Activated CD4-positive, alpha-beta T cell treated with anti-CD3 and anti-CD28 coated beads for 36 hours (primary cell): ENCODE measurements at regions of chr9 and their contacts with region 1.

Region 1: DNA sequence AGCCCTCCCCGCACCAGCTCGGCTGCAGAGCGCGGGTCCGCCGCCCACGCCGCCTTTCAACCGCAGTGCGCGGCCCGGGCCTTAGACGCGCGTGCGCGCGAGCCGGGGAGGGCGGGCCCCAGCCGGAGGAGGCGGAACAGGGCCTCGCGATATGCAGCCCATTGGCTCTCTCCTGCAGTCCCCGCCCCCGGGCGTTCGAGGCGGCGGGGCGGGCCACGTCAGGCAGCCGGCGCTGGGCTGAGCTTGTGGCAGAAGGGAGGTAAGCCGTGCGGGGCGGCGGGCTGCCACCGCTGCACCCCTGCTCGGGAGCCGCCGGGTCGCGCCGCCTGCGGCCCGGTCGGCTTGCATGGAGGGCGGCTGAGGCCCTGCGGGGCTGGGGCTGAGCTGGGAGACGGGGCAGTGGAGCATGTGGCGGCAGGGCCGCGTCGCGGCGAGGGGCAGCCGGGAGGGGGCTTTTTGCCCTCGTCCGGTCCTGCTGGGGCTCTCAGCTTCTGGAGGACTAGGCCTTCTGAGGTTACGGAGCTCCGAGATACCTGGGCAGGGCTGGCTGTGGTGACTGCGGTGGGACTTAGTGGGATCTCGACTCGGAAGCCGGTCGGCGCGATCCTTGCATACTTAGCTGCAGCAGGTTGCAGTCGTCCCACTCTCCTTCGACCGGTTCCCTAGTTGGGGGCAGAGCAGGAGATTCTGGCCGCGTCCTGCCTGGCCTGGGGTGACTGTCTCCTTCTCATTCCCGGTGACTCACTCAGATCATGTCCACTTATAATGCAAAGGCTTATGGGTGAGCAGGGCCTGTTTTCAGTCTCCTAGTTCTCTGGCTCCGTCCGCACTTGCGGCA is at the start of gene FOCAD:
- DNase-seq: peak; percentile 97
- ATAC-seq: peak; percentile 98
- H3K4me3 Mint-ChIP-seq: peak within 1 kb of the TSS; percentile 86
- H3K27ac Mint-ChIP-seq: peak within 1 kb of the TSS; percentile 75
- H3K4me1 Mint-ChIP-seq: peaks cover 27% of the 10 kb centered on the region
- H3K27me3 Mint-ChIP-seq: no peaks in the 10 kb centered on the region
- total RNA-seq, gene FOCAD: 32.5 to 34.3 TPM

Region 2: DNA sequence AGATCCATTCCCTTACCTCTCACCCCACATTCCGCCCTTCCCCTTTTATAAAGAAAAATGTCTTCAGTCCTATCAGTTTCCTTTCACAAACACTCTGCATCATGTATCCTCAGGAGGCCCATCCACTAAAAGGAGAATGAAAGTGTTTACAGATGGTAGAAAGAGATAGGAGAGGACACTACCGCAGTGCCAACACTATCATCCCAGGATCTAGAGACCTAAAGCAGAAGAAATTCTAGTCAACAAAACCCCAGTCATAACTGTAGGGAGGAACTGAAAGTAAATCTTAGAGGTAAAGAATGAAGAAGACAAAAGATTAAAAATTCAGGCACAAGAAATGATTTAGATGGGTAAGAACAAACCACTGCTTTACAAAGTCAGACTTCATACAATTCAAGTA is 176.0 kb before region 1 on chr9:
- CTCF ChIA-PET with region 1: no interaction called
- POLR2A ChIA-PET with region 1: no interaction called
- intact Hi-C with region 1: loop called (anchors 2 to 5 kb)
- DNase-seq: no peak
- ATAC-seq: peak; percentile 79
- H3K4me3 Mint-ChIP-seq: peak overlapping the region; percentile 27
- H3K27ac Mint-ChIP-seq: peak overlapping the region; percentile 22
- H3K4me1 Mint-ChIP-seq: peaks cover 81% of the 10 kb centered on the region
- H3K27me3 Mint-ChIP-seq: no peaks in the 10 kb centered on the region

Region 3: GRCh38 chr9:20771729-20772128 is 87.5 kb after region 1 on chr9:
- CTCF ChIA-PET with region 1: no interaction called
- POLR2A ChIA-PET with region 1: no interaction called
- intact Hi-C with region 1: no loop called
- DNase-seq: no peak
- ATAC-seq: no peak
- H3K4me3 Mint-ChIP-seq: no peak overlapping the region
- H3K27ac Mint-ChIP-seq: no peak overlapping the region
- H3K4me1 Mint-ChIP-seq: no peaks in the 10 kb centered on the region
- H3K27me3 Mint-ChIP-seq: no peaks in the 10 kb centered on the region

Region 4: DNA sequence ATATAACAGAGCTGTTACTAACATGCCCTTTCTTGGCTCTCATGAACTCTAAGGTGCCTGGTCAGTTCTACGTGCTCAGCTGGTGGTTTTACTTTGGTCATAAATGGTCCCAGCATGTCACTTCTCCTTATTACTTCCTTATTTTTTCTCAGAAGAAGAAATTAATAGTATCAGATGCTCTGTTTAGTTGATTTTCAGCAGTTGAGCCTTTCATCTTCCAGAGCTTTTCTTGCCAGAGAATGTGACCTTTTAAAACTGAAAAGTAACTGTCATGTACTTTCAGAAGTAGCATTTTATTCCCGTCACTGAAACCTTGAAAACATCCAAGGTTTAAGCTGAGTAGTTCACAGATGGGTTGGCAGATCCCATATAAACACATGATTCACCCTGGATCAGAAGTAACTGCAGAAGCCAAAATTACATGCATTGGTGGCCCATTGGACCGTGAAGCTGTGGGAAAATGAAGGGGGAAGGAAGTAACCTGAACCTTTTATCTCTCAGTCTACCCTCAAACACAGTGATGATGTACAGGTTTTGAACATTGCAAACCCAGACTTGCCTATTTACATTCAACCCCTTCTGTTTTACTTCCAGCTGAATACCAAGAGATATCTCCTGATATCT is 296.7 kb after region 1 on chr9:
- CTCF ChIA-PET with region 1: no interaction called
- POLR2A ChIA-PET with region 1: no interaction called
- intact Hi-C with region 1: no loop called
- DNase-seq: no peak
- ATAC-seq: no peak
- H3K4me3 Mint-ChIP-seq: no peak overlapping the region
- H3K27ac Mint-ChIP-seq: no peak overlapping the region
- H3K4me1 Mint-ChIP-seq: peaks cover 4% of the 10 kb centered on the region
- H3K27me3 Mint-ChIP-seq: no peaks in the 10 kb centered on the region

Region 5: DNA sequence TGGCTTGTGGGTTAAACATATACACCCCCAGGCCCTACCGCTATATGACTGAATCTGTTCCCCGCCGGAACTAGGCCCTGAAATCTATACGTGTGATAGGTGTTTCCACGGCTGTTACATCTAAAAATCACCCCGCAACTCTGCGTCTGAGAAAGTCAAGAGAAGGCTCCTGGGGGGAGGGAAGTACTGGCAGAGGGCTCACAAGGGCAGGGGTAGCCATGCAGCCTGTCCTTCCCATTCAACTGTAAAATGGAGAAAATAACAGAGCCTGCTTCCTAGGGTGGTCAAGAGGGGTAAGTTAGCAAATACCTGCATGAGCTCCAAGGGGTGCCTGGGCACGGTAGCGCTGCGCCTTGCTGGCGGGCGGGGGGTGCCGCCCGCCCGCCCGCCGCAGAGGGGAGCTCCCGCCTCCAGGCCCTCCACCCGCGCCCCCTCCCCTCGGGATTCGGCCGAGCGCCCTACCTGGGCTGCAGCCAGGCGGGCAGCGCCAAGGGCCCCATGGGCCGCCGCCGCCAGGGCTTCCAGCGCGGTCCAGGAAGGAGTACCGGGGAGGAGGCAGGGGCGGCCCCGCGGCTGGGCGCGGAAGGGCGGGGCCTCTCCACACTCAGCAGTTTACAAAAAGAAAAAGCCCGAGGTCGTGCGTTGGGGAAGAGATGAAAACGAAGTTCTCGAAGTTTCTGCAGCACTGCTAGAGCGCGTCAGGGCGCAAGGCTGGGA is 347.0 kb after region 1 on chr9 and contains the start of gene HACD4:
- CTCF ChIA-PET with region 1: no interaction called
- POLR2A ChIA-PET with region 1: no interaction called
- intact Hi-C with region 1: loop called in 1 of 2 experiments (anchors 1 kb)
- DNase-seq: peak; percentile 79
- ATAC-seq: peak; percentile 79
- H3K4me3 Mint-ChIP-seq: peak within 1 kb of the TSS; percentile 53
- H3K27ac Mint-ChIP-seq: peak within 1 kb of the TSS; percentile 71
- H3K4me1 Mint-ChIP-seq: peaks cover 26% of the 10 kb centered on the region
- H3K27me3 Mint-ChIP-seq: no peaks in the 10 kb centered on the region
- total RNA-seq, gene HACD4: 2.7 to 3.0 TPM

Region 6: GRCh38 chr9:21096172-21096900 is 412.1 kb after region 1 on chr9:
- CTCF ChIA-PET with region 1: no interaction called
- POLR2A ChIA-PET with region 1: no interaction called
- intact Hi-C with region 1: loop called in 1 of 2 experiments (anchors 2 kb)
- DNase-seq: peak; percentile 64
- ATAC-seq: peak; percentile 95
- H3K4me3 Mint-ChIP-seq: peak overlapping the region; percentile 58
- H3K27ac Mint-ChIP-seq: peak overlapping the region; percentile 87
- H3K4me1 Mint-ChIP-seq: peaks cover 31% of the 10 kb centered on the region
- H3K27me3 Mint-ChIP-seq: no peaks in the 10 kb centered on the region